ENCODE measurements at regions of chr2 and their contacts with region 1.

Region 1: DNA sequence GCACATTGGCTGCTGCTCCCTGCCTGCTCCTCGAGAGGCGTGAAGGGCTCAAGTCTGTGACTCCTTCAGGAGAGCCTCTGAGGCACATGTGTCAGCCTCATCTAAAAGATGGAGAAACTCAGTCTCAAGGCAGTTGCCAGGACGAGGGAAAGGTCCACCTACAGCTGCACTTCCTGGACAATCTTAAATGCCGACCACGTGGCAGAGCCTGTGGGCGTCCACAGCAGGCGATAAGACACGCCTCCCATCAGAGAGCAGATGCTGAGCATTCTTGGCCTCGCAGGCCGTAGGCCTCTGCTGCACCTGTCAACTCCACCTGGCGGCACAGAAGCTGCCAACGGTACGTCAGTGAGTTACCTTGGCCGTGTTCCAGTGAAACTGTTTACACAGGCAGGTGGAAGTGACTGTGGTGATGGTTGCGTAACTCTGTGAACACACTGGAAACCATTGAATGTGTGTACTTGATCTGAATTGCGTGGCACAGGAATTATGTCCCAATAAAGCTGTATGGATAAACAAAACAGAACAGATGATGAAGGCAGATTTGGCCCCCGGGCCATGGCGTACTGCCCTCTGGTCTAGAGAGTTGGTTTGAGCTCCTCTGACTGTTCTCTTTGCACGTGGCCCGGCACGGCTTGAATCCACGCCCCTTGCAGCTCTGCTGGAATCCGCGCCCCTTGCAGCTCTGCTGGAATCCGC is 114.5 kb downstream of the RNF144A start:
- DNase-seq: peak; percentile 10
- H3K4me3 ChIP-seq: no peak overlapping the region
- H3K27ac ChIP-seq: no peak overlapping the region
- H3K4me1 ChIP-seq: no peaks in the 10 kb centered on the region
- H3K27me3 ChIP-seq: no peaks in the 10 kb centered on the region
- CTCF ChIP-seq: no peak

Region 2: DNA sequence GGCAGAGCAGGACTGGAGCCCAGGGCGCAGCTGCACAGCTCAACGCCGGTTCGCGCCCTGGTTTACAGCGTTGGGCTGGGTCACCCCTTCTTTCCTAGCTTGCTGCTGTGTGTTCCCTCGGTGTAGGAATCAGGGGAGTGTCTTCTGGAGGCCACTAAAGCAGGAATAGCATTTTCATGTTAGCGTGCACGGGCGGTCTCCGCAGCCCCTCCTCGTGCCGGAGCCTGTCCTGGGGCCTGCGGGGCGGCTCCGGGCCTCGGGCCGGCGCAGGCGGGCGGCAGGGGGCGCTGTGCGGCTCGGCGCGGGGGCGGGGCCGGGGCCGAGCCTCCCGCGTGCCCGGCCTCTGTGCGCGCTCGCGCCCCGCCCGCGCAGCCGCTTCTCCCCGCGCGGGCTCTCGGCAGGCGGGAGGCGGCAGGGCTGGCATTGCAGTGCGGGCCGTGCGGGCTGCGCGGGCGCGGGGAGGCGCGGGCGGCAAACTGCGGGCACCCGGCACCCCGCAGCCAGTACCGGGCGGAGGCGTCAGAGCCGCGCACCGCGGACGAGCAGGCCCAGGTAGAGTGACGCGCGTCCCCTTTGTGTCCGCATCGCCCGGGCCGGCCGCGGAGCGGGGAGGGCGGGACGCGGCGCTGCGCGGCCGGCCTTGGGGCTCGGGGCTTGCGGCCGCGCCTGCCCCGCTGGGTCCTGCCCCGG is 114.5 kb before region 1 on chr2 and contains the start of gene RNF144A:
- CTCF ChIA-PET with region 1: no interaction called
- POLR2A ChIA-PET with region 1: no interaction called
- intact Hi-C with region 1: loop called (anchors 5 kb)
- DNase-seq: peak; percentile 81
- H3K4me3 ChIP-seq: peak within 1 kb of the TSS; percentile 71
- H3K27ac ChIP-seq: peak within 1 kb of the TSS; percentile 57
- H3K4me1 ChIP-seq: peaks cover 4% of the 10 kb centered on the region
- H3K27me3 ChIP-seq: no peaks in the 10 kb centered on the region
- CTCF ChIP-seq: peak; percentile 45
- total RNA-seq, gene RNF144A: 13.6 and 19.6 TPM in 2 replicates

Region 3: DNA sequence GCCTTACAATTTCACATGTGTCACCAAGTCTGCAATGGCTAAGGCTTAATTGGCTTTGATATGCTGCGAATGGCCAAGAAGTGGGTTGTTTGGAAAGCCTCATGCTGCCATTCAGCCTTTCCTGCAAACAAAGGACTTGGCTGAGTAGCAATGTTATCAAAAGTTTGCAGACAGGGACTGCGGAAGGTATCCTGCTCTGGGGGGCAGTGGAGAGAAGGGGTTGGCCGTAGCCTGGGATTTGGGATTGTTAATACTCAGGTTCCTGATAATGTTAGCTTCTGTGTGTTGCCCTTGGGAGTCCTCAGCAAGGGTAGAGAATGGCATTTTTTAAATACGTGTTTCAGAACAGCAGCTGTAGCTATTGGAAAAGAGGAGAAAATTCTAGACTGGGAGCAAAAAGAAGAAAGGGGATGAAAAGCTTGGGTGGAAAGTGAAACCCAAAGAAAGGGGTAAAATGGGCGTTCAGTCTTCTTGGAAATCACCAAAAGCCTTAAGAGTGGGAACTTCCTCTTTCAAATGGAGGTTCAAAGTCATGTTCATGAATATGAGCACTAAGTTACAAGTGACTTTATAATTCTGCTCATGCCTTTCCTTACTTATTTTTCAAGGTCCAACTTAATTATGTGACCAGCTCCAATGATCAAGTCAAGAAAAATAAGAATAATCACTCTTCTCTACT is 210.6 kb after region 1 on chr2:
- CTCF ChIA-PET with region 1: no interaction called
- POLR2A ChIA-PET with region 1: no interaction called
- intact Hi-C with region 1: no loop called
- DNase-seq: no peak
- H3K4me3 ChIP-seq: no peak overlapping the region
- H3K27ac ChIP-seq: no peak overlapping the region
- H3K4me1 ChIP-seq: no peaks in the 10 kb centered on the region
- H3K27me3 ChIP-seq: no peaks in the 10 kb centered on the region
- CTCF ChIP-seq: no peak